ENCODE measurements at regions of chr4 and their contacts with region 1.

Region 1: DNA sequence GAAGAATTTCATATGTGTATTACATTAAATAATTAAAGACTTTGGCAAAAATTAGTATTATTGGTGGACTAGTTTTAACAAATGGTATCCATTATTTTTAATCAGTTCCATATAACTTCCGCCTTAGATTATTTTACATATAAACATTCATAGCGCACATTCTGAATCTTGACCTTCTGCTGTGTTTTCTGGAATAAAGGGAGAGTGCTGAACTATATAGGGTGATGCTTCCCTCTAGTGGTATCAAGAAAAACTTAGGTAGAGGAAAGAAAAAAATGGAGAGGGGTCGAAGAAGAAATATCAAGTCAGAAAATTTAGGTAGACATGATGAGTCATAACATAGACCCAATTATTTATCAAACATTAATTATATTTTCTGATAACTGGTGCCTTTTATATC is 155.6 kb upstream of the PACRGL start:
- DNase-seq: no peak
- H3K4me3 ChIP-seq: no peak overlapping the region
- H3K27ac ChIP-seq: no peak overlapping the region
- H3K27me3 ChIP-seq: no peaks in the 10 kb centered on the region
- CTCF ChIP-seq: peak; percentile 35 to 87 (median 71)

Region 2: DNA sequence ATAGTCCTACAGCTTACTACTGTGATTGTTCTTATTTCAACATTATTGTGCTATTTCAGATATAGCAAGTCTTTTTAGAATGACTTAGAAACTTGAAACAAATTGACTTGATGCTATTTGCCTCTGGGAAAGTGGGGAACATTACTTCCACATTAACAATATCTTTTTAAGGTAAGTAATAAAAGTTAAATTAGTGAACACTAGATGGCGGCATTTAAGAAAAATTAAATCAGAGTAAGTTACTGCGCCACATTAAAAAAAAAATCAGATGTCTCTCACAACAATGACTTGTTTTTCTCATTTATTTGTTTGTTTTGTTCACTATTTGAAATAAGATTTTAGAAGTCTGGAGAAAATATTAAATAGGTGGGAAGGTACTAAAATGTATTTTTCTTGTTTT is 1319.8 kb before region 1 on chr4:
- intact Hi-C with region 1: loop called in 1 of 2 experiments (anchors 10 kb)
- DNase-seq: no peak
- H3K4me3 ChIP-seq: no peak overlapping the region
- H3K27ac ChIP-seq: no peak overlapping the region
- H3K27me3 ChIP-seq: peaks cover 0 to 3% (median 0%) of the 10 kb centered on the region in 45 donors
- CTCF ChIP-seq: peak; percentile 34 to 79 (median 57)

Region 3: DNA sequence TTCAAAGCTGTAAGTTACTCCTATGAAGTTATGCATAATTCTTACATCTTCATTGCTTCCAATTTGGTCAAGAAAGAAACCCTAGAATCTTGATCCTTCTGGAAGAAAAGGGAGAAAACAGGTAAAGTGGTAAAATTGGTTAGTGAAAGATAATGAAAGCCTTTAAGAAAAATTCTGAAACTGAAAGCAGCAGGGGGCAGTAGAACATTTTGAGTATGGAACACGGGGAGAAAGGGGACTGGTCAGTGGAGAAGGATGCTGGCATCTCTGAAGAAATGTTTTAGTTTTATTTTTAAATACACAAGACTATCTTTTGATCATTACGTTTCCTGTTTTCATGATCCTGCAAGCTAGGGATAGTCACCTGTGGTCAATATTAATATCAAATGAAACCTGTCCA is 238.7 kb before region 1 on chr4:
- intact Hi-C with region 1: loop called (anchors 5 to 10 kb)
- DNase-seq: no peak
- H3K4me3 ChIP-seq: peak overlapping the region in 2 of 59 donors; percentile 9 to 15
- H3K27ac ChIP-seq: peak overlapping the region in 22 of 59 donors; percentile 0 to 70 (median 26)
- H3K27me3 ChIP-seq: no peaks in the 10 kb centered on the region
- CTCF ChIP-seq: peak; percentile 25 to 91 (median 66)

Region 4: GRCh38 chr4:20370274-20370673 is 174.4 kb before region 1 on chr4:
- intact Hi-C with region 1: no loop called
- DNase-seq: no peak
- H3K4me3 ChIP-seq: no peak overlapping the region
- H3K27ac ChIP-seq: no peak overlapping the region
- H3K27me3 ChIP-seq: peaks cover 0 to 3% (median 0%) of the 10 kb centered on the region in 45 donors
- CTCF ChIP-seq: no peak

Region 5: DNA sequence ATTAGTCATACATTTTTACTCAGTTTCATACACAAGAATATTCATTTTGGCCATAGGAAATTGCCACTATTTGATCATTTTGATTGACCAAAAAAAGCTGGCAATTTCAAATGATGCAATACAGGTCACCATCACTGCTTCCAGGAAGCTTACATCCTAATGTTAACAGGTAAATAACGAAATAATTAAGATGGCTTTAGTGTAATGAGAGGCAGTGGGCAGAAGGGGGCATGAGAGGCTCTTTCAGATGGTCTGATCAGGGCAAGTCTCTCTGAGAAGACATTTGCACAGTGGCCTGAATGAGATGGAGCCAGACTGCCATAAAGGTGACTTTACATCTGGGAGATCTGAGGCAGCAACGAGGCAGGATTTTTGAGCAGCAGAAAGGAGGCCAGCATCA is 122.2 kb before region 1 on chr4:
- intact Hi-C with region 1: loop called (anchors 10 kb)
- DNase-seq: peak in 1 of 10 donors; percentile 28
- H3K4me3 ChIP-seq: no peak overlapping the region
- H3K27ac ChIP-seq: no peak overlapping the region
- H3K27me3 ChIP-seq: no peaks in the 10 kb centered on the region
- CTCF ChIP-seq: peak; percentile 10 to 68 (median 50)